ENCODE measurements at regions of chr2 and their contacts with region 1.

Region 1: DNA sequence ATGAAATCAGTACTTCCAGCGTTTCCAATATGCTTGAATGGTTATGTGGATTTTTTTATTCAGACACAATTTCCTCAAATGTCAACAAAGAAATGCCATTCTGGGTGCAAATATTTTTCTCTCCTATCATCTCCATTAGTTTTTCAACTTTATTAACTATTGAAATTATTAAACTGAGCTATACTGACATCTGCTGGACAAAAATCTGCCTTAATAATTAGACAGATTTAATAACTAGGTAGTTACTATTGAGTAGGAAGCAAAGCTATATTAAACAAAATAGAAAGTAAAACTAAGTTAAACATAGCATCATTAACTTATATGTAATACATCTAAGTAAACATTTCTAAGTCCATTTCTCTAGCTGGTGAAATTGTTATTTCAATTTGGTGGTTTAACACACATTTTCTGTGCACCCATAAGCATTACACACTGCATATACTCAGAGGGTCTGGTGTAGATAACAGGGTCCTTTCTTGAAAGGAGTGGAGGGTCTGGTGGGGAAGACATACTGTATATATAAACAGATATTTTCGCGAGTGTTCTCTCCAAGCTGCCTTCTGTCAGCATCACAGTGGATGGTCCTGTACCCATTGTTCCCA is 77.0 kb downstream of the LANCL1 start:
- DNase-seq: no peak
- ATAC-seq: peak in 1 of 4 donors; percentile 54
- H3K4me3 ChIP-seq: no peak overlapping the region
- H3K27ac ChIP-seq: no peak overlapping the region
- H3K4me1 ChIP-seq: no peaks in the 10 kb centered on the region
- H3K27me3 ChIP-seq: no peaks in the 10 kb centered on the region
- CTCF ChIP-seq: peak in 2 of 4 donors; percentile 40 to 42

Region 2: DNA sequence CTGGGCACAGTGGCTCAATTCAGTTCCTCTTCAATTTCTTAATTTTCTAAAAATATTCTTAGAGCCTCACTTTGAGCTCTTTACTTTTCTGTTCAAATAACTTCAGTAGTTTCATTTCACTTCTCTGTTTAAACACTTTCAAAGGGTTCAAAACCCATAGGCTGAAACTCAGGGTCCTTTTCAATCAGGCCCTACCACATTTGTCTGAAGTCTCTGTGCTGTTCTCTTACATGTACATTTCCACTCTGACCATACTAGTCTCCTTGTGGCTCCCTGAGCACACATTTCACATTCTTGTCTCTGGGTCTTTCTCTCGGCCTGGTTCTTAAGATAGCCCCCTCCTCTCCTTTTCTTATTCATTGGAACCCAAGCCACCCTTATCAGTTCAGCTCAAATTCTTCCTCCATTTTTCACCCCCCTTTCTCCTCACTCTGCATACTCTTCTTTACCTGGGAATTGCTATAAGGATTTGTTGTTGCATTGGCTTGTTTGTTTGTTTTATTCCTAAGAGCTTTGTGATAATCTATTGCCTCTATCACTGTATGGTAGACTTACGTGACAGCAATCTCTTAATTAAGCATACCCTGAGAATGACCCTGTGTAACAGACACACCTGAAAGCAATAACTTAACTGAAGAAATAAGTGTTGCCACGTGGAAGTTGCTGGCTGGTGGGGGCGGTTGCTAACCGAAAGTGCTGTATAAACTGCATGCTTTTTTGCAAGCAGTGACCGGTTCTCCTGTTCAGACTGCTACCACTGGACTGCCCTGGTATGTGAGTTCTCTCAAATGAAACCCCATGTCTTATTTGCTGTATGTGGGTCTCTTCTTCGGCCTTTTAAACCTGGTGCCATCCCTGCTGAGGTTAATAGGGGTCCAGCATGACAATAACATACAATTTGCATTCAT is 146.6 kb before region 1 on chr2:
- intact Hi-C with region 1: loop called in 2 of 3 experiments (anchors 10 kb)
- DNase-seq: no peak
- ATAC-seq: no peak
- H3K4me3 ChIP-seq: no peak overlapping the region
- H3K27ac ChIP-seq: no peak overlapping the region
- H3K4me1 ChIP-seq: no peaks in the 10 kb centered on the region
- H3K27me3 ChIP-seq: no peaks in the 10 kb centered on the region
- CTCF ChIP-seq: no peak

Region 3: DNA sequence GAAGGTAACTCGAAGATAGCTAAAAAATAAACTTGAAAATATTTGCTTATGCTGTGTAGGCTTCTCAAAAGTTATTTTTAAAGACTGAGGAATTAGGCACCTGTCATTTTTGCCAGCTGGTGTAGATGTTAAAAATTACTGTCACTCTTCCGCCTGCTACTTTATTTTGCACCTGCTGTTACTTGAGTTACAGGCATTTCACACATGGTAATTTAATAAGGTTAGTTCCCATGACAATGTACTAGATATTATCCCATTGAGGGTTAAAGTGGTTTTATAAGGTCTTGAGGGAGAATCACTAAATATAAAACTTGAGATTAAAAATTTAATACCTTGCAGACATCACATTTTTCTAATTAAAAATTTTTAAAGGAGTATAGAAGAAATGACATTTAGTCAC is 111.1 kb before region 1 on chr2:
- intact Hi-C with region 1: no loop called
- DNase-seq: no peak
- ATAC-seq: no peak
- H3K4me3 ChIP-seq: no peak overlapping the region
- H3K27ac ChIP-seq: no peak overlapping the region
- H3K4me1 ChIP-seq: no peaks in the 10 kb centered on the region
- H3K27me3 ChIP-seq: no peaks in the 10 kb centered on the region
- CTCF ChIP-seq: no peak

Measured in pancreas (tissue), 10 donors.